GM10248 (cell line): ENCODE measurements at regions of chr18 and their contacts with region 1.

Region 1: GRCh38 chr18:3397071-3397745 is 52.8 kb upstream of the TGIF1 start:
- DNase-seq: no peak
- CTCF ChIP-seq: no peak

Region 2: DNA sequence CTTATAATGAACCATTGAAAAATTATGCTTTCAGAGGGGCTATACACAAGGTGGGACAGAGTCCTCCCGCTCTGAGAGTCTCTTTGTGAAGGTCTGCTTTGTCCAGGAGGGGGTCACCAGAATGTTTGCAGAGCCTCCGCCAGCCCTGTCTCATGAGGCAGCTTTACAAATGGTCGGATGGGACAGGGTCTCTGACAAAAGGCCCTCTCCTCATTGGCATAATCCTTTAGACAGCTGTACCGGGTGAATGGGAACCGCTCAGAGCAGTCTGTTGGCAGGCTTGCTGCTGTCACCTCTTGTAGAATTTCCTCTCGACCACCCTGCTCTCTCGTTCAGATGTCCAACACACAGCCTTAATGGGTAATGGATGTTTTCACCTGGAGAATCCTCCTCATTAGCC is 12.6 kb after region 1 on chr18:
- CTCF ChIA-PET with region 1: interaction called, 10 read pairs
- POLR2A ChIA-PET with region 1: no interaction called
- DNase-seq: no peak
- CTCF ChIP-seq: no peak